CD4-positive, alpha-beta T cell (primary cell): ENCODE measurements at regions of chr4 and their contacts with region 1.

Region 1: GRCh38 chr4:105140684-105141490 is 5.8 kb upstream of the TET2 start:
- DNase-seq: peak in 9 of 14 experiments; percentile 17 to 79 (median 37)
- ATAC-seq: peak; percentile 52
- H3K4me3 ChIP-seq: no peak overlapping the region
- H3K4me3 Mint-ChIP-seq: no peak overlapping the region
- H3K27ac ChIP-seq: no peak overlapping the region
- H3K27ac Mint-ChIP-seq: no peak overlapping the region
- H3K4me1 ChIP-seq: peaks cover 5% of the 10 kb centered on the region
- H3K4me1 Mint-ChIP-seq: peaks cover 7% of the 10 kb centered on the region
- H3K27me3 ChIP-seq: peaks cover 0 to 3% of the 10 kb centered on the region in 2 experiments
- H3K27me3 Mint-ChIP-seq: no peaks in the 10 kb centered on the region
- CTCF ChIP-seq: peak; percentile 78

Region 2: DNA sequence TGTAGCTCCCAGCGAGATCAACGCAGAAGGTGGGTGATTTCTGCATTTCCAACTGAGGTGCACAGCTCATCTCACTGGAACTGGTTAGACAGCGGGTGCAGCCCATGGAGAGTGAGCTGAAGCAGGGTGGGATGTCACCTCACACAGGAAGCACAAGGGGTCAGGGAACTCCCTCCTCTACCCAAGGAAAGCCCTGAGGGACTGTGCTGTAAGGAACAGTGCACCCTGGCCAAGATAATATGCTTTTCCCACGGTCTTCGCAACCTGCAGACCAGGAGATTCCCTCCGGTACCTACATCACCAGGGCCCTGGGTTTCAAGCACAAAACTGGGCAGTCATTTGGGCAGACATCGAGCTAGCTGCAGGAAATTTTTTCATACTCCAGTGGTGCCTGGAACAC is 210.6 kb before region 1 on chr4:
- CTCF ChIA-PET with region 1: no interaction called
- POLR2A ChIA-PET with region 1: no interaction called
- intact Hi-C with region 1: no loop called
- DNase-seq: no peak
- ATAC-seq: no peak
- H3K4me3 ChIP-seq: no peak overlapping the region
- H3K4me3 Mint-ChIP-seq: no peak overlapping the region
- H3K27ac ChIP-seq: no peak overlapping the region
- H3K27ac Mint-ChIP-seq: no peak overlapping the region
- H3K4me1 ChIP-seq: peaks cover 15% of the 10 kb centered on the region
- H3K4me1 Mint-ChIP-seq: peaks cover 18% of the 10 kb centered on the region
- H3K27me3 ChIP-seq: no peaks in the 10 kb centered on the region
- H3K27me3 Mint-ChIP-seq: no peaks in the 10 kb centered on the region
- CTCF ChIP-seq: no peak

Region 3: GRCh38 chr4:105102016-105102415 is 38.9 kb before region 1 on chr4:
- CTCF ChIA-PET with region 1: no interaction called
- POLR2A ChIA-PET with region 1: no interaction called
- intact Hi-C with region 1: no loop called
- DNase-seq: no peak
- ATAC-seq: no peak
- H3K4me3 ChIP-seq: no peak overlapping the region
- H3K4me3 Mint-ChIP-seq: no peak overlapping the region
- H3K27ac ChIP-seq: no peak overlapping the region
- H3K27ac Mint-ChIP-seq: no peak overlapping the region
- H3K4me1 ChIP-seq: no peaks in the 10 kb centered on the region
- H3K4me1 Mint-ChIP-seq: no peaks in the 10 kb centered on the region
- H3K27me3 ChIP-seq: peaks cover 0 to 3% of the 10 kb centered on the region in 2 experiments
- H3K27me3 Mint-ChIP-seq: peaks cover 29% of the 10 kb centered on the region
- CTCF ChIP-seq: no peak

Region 4: GRCh38 chr4:105389167-105389566 is 248.3 kb after region 1 on chr4:
- CTCF ChIA-PET with region 1: no interaction called
- POLR2A ChIA-PET with region 1: no interaction called
- intact Hi-C with region 1: no loop called
- DNase-seq: no peak
- ATAC-seq: no peak
- H3K4me3 ChIP-seq: no peak overlapping the region
- H3K4me3 Mint-ChIP-seq: no peak overlapping the region
- H3K27ac ChIP-seq: no peak overlapping the region
- H3K27ac Mint-ChIP-seq: no peak overlapping the region
- H3K4me1 ChIP-seq: no peaks in the 10 kb centered on the region
- H3K4me1 Mint-ChIP-seq: no peaks in the 10 kb centered on the region
- H3K27me3 ChIP-seq: no peaks in the 10 kb centered on the region
- H3K27me3 Mint-ChIP-seq: no peaks in the 10 kb centered on the region
- CTCF ChIP-seq: no peak

Region 5: GRCh38 chr4:105631818-105632400 is 491.0 kb after region 1 on chr4:
- CTCF ChIA-PET with region 1: no interaction called
- POLR2A ChIA-PET with region 1: no interaction called
- intact Hi-C with region 1: loop called (anchors 1 to 5 kb)
- DNase-seq: no peak
- ATAC-seq: no peak
- H3K4me3 ChIP-seq: no peak overlapping the region
- H3K4me3 Mint-ChIP-seq: no peak overlapping the region
- H3K27ac ChIP-seq: no peak overlapping the region
- H3K27ac Mint-ChIP-seq: no peak overlapping the region
- H3K4me1 ChIP-seq: no peaks in the 10 kb centered on the region
- H3K4me1 Mint-ChIP-seq: no peaks in the 10 kb centered on the region
- H3K27me3 ChIP-seq: peaks cover 0 to 4% of the 10 kb centered on the region in 2 experiments
- H3K27me3 Mint-ChIP-seq: peaks cover 9% of the 10 kb centered on the region
- CTCF ChIP-seq: peak; percentile 64